Colonic mucosa (tissue), 4 donors: ENCODE measurements at regions of chr7 and their contacts with region 1.

Region 1: GRCh38 chr7:20172736-20173334 is 44.3 kb downstream of the MACC1 start:
- DNase-seq: peak; percentile 52
- H3K4me3 ChIP-seq: no peak overlapping the region
- H3K27ac ChIP-seq: no peak overlapping the region
- H3K4me1 ChIP-seq: no peaks in the 10 kb centered on the region
- H3K27me3 ChIP-seq: no peaks in the 10 kb centered on the region
- CTCF ChIP-seq: no peak

Region 2: GRCh38 chr7:19754521-19755116 is 418.2 kb before region 1 on chr7:
- intact Hi-C with region 1: loop called (anchors 5 kb)
- DNase-seq: no peak
- H3K4me3 ChIP-seq: no peak overlapping the region
- H3K27ac ChIP-seq: no peak overlapping the region
- H3K4me1 ChIP-seq: no peaks in the 10 kb centered on the region
- H3K27me3 ChIP-seq: no peaks in the 10 kb centered on the region
- CTCF ChIP-seq: peak; percentile 68

Region 3: GRCh38 chr7:19939746-19940145 is 233.1 kb before region 1 on chr7:
- intact Hi-C with region 1: no loop called
- DNase-seq: no peak
- H3K4me3 ChIP-seq: no peak overlapping the region
- H3K27ac ChIP-seq: no peak overlapping the region
- H3K4me1 ChIP-seq: no peaks in the 10 kb centered on the region
- H3K27me3 ChIP-seq: no peaks in the 10 kb centered on the region
- CTCF ChIP-seq: no peak

Region 4: DNA sequence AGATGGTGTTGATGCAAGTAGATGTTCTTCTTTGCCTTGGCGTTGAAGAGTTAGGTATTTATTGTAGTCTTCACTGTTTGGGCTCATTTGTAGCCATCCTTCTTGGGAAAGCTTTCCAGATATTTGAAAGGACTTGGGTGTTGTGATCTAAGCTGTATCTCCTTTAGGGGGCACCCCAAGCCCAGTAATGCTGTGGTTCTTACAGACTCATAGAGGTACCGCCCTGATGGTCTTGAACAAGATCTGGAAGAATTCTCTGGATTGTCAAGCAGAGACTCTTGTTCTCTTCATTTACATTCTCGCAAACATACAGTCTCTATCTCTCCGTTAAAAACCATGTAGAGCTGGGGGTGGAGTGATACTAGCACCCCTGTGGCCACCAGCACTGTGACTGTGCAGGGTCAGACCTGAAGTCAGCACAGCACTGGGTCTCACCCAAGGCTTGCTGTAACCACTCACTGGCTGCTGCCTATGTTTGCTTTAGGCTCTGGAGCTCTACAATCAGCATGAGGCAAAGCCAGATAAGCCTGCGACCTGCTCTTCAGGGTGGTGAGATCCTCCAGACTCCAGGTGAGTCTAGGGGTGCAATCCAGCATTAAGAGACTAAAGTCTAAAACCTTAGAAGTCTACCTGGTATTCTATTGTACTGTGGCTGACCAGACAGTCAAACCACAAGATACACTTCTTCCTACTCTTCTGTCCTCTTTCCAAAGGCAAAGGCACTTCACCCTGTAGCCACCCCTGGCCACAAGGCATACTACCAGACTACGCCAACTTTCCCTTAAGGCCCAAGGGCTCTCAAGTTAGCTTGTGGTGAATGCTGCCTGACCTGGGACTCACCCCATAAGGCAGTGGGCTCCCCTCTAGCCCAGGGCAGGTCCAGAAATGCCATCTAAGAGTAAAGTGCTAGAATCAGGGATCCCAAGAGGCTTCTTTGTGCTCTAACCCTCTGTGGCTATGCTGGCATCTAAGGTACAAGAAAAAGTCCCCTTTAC is 189.7 kb before region 1 on chr7:
- intact Hi-C with region 1: loop called (anchors 5 kb)
- DNase-seq: peak; percentile 51
- H3K4me3 ChIP-seq: no peak overlapping the region
- H3K27ac ChIP-seq: no peak overlapping the region
- H3K4me1 ChIP-seq: no peaks in the 10 kb centered on the region
- H3K27me3 ChIP-seq: no peaks in the 10 kb centered on the region
- CTCF ChIP-seq: no peak

Region 5: GRCh38 chr7:20199015-20199737 is 26.3 kb after region 1 on chr7:
- intact Hi-C with region 1: no loop called
- DNase-seq: peak; percentile 89
- H3K4me3 ChIP-seq: no peak overlapping the region
- H3K27ac ChIP-seq: peak overlapping the region; percentile 62
- H3K4me1 ChIP-seq: no peaks in the 10 kb centered on the region
- H3K27me3 ChIP-seq: no peaks in the 10 kb centered on the region
- CTCF ChIP-seq: no peak

Region 6: DNA sequence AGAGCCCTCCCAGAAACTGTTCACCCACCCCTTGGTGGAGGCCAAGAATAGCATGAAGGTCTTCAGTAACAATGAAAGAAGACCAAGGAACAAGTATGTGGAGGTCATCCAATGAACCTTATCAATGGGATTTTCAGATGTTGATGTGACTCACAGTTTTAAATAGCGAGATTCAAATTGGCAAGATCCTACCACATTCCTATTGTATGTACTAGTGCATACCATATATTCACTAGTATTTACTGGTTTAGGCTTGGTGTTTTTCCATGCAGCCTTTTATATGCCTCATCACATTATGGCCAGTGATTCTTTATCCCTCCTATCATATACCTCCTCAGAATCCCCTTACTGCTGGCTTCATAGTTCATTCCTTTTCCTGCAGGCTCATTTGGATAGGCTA is 212.3 kb after region 1 on chr7:
- intact Hi-C with region 1: no loop called
- DNase-seq: no peak
- H3K4me3 ChIP-seq: no peak overlapping the region
- H3K27ac ChIP-seq: no peak overlapping the region
- H3K4me1 ChIP-seq: no peaks in the 10 kb centered on the region
- H3K27me3 ChIP-seq: no peaks in the 10 kb centered on the region
- CTCF ChIP-seq: no peak